ENCODE measurements at regions of chr4 and their contacts with region 1.

Region 1: DNA sequence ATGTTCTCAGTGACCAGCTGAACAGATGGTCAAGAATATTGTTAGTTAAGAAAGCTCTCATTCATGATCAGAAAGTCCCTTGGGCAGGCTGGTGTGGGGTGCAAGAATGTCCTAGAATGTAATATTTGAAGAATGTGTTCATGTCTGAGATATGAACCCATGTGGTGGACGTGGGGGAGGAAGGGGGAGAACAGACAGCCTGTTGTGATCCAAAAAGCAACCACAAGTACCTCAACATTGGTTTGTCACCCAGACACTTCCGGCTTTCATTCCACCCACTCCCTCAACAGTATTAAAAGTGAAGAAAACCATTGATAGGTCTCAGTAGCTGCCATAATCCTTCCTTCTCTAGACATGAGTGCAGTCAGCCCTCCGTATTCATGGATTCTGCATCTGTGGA is 82.2 kb downstream of the MAML3 start:
- DNase-seq: peak; percentile 85
- H3K4me3 Mint-ChIP-seq: no peak overlapping the region
- H3K27ac Mint-ChIP-seq: peak overlapping the region; percentile 60
- H3K4me1 Mint-ChIP-seq: peaks cover 29% of the 10 kb centered on the region
- H3K27me3 Mint-ChIP-seq: peaks cover 28% of the 10 kb centered on the region

Region 2: GRCh38 chr4:140049024-140049848 is 22.6 kb before region 1 on chr4:
- CTCF ChIA-PET with region 1: interaction called, 5 read pairs
- POLR2A ChIA-PET with region 1: no interaction called
- intact Hi-C with region 1: loop called (anchors 2 kb)
- DNase-seq: peak; percentile 62
- H3K4me3 Mint-ChIP-seq: peak overlapping the region; percentile 57
- H3K27ac Mint-ChIP-seq: no peak overlapping the region
- H3K4me1 Mint-ChIP-seq: peaks cover 24% of the 10 kb centered on the region
- H3K27me3 Mint-ChIP-seq: peaks cover 32% of the 10 kb centered on the region

Region 3: DNA sequence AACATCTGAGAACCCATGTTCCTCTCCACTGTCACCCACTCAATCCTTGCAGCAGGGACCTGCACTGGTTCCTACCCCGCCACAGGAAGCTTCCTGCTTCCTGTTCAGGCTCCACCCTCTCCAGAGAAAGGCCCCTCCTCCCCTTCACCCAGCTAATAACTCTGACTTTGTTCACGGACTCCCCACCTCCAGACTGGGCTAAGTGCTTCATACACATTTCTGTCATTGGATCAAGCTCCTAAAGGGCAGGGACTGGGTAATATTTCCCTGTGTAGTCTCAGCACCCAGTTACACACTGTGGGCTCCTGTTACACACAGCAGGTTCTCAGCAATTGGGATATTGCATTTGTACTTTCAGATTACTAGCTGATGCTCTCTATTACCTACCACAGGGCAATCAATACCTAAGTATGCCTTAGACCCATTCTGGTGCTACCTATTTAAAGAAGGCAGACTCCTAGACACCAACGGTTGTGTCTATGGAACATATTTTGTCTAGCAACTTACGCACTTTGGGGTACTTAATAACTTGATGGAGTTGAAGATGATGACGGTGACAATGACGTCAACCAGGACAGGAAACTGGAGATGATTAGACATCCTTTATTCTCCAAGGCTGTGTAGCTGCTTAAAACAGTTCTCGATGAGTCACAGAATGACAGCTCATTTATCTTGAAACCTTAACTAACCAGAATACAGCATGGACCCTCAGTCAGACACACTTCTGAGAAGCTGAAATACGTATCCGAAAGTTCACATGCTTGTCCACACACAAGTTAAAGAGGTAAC is 24.1 kb after region 1 on chr4:
- CTCF ChIA-PET with region 1: interaction called, 3 read pairs
- POLR2A ChIA-PET with region 1: no interaction called
- intact Hi-C with region 1: loop called (anchors 1 kb)
- DNase-seq: peak; percentile 75
- H3K4me3 Mint-ChIP-seq: peak overlapping the region; percentile 75
- H3K27ac Mint-ChIP-seq: peak overlapping the region; percentile 98
- H3K4me1 Mint-ChIP-seq: peaks cover 71% of the 10 kb centered on the region
- H3K27me3 Mint-ChIP-seq: no peaks in the 10 kb centered on the region

Region 4: DNA sequence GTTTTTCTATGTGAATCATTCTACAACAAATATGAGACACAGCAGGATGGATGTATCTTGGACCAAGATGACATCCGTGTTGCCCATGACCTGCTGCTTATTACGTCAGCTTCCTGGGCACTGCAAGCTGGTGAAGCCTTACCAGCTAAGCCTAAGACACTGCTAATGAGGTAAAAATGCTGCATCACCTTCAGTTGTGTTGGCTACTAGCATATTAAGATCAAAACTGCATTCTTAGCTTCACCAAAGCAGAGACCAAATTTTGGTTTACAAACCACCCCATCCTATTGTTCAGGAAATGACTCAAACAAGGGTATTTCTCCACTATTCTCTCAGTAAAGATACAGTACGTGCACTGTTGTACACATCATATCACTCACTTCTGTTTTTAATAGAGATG is 31.9 kb after region 1 on chr4:
- CTCF ChIA-PET with region 1: interaction called, 3 read pairs
- POLR2A ChIA-PET with region 1: no interaction called
- intact Hi-C with region 1: loop called (anchors 1 kb)
- DNase-seq: peak; percentile 81
- H3K4me3 Mint-ChIP-seq: no peak overlapping the region
- H3K27ac Mint-ChIP-seq: peak overlapping the region; percentile 73
- H3K4me1 Mint-ChIP-seq: peaks cover 49% of the 10 kb centered on the region
- H3K27me3 Mint-ChIP-seq: no peaks in the 10 kb centered on the region

Region 5: DNA sequence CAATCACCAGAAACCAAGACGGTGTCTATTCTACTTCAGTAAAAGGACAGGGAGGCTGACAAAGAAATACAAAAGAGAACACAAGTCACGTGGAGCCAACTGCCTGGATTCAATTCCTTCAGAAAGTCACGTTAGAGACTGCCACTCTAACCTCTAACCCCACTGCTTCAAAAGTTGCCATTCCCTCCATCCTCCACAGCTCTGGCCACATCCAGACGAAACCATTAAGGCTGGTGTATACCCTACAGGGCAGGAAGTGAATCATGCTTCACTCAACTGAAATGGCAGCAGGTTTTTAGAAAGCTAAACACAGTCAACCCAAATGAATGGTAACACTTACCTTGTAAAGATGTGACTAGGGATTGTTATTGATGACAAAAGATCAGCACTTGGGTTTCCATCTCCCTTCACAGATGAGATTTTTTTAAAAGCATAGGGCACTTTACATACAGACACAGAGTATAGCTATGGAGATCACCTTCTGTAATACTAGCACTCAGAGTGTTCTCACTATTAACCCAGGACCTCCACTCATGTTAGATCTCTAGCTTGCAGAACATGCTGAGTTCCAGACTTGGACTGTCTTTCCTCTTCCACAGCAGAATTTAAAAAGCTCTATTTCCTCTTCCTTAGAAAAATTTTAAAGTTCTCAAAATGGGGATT is 44.8 kb after region 1 on chr4:
- CTCF ChIA-PET with region 1: no interaction called
- POLR2A ChIA-PET with region 1: interaction called, 3 read pairs
- intact Hi-C with region 1: loop called (anchors 2 kb)
- DNase-seq: peak; percentile 49
- H3K4me3 Mint-ChIP-seq: no peak overlapping the region
- H3K27ac Mint-ChIP-seq: peak overlapping the region; percentile 14
- H3K4me1 Mint-ChIP-seq: peaks cover 17% of the 10 kb centered on the region
- H3K27me3 Mint-ChIP-seq: peaks cover 7% of the 10 kb centered on the region

Measured in activated CD4-positive, alpha-beta memory T cell treated with anti-CD3 and anti-CD28 coated beads for 36 hours (primary cell).